Sciatic nerve (tissue), 2 donors: ENCODE measurements at regions of chr3 and their contacts with region 1.

Region 1: GRCh38 chr3:183188895-183189462 is 26.4 kb upstream of the LAMP3 start:
- DNase-seq: no peak
- ATAC-seq: peak; percentile 69

Region 2: DNA sequence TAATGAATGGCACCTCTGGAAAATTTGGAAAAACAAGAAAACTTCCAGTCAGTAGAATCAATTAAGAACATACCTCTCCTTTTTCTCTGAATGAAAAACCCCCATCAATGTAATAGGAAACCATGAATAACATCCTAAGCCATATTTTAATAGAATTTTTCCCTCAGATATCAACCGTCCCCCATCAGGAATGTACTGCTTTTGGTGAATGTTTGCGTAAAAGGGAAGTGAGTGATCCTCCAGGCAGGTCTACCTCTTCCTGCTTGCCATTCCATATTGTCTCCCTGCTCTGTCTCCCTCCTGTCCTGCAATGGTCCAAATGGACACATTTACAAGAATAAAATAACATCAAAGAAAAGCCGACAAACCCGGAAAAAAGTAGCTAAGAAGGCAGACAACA is 57.2 kb before region 1 on chr3:
- intact Hi-C with region 1: loop called (anchors 10 kb)
- DNase-seq: no peak
- ATAC-seq: no peak

Region 3: DNA sequence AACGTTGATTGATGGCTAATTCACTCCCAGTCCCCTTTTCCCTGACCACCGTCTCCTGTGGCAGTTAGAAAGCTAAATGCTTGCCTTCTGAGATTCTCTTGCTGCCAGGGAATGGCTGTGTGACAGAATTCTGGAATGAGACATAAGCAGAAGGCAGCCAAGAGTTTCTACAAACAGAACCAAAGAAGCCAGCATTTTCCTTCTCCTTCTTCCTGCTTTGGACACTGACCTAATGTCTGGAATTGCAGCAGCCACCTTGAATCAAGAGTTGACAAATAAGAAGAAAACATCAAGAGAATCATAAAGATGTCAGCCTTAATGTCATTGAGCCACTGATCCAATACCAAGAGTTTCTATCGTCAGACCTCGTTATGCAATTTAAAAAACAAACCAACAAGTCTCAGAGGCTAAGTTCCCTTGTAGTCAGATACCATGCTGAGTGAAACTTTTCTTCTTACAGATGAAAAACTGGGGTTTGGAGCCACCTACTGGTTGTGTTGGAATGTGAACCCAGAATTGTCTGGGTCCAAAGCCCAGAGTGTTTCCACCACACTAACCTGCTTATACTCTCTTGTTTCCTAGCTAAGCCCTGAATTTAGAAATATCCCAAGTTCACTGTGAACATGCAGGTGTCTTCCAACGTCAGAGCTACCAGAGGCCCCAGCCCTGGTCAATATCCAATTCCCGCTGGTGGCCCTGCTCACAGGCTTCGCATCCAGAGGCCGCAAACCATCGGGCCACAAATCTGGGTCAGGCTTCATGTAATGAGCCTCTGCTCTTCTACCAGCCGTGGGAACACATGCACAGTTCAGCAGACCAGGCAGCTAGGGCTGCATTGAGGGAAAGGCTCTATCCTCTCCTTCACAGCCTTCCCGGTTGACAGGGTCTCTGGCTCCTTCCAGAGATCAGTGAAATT is 197.0 kb after region 1 on chr3:
- intact Hi-C with region 1: loop called (anchors 5 kb)
- DNase-seq: no peak
- ATAC-seq: peak; percentile 84